ENCODE measurements at regions of chr22 and their contacts with region 1.

Region 1: DNA sequence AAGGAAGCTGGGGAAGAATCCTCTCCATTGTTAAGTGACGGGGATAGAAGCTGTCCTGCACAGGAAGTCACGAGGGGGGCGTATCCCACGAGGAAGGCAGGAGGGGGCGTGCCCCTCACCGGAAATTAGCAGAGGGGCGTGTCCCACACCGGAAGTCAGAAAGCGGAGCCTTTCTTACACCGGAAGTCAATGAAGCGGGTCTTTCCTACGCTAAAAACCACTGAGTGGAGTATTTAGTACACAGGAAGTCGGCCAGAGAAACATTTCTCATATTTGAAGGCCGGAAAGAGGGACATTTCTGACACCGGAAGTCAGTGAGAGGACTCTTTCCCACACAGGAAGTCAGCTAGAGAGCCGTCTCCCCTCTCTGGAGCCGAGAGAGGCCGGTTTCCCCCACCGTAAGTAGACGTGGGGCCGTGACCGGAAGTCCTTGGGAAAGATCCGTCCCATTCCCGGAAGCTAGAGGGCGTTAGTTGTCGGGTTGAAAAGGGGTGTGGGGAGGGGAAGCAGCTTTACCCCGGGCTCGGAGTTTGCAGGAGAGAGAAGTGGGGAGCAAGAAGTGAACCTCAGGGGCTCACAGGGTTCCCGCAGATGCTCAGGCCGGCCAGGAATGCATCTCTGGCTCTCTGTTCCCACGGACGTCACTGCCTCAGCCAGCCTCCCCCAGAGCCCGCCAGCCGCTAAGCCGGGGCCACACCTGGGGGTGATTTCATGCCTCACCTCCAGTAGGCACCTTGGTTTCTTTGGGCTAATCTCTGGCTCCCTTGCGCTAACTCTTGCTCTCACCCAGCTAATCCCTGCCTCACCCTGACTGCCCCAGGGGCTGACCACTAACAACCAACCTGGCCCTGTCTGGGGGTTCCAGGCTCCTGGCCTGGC is 15.4 kb downstream of the MIAT start:
- DNase-seq: peak; percentile 99
- H3K4me3 ChIP-seq: peak overlapping the region; percentile 82
- H3K27ac ChIP-seq: peak overlapping the region; percentile 97
- H3K4me1 ChIP-seq: peaks cover 71% of the 10 kb centered on the region
- CTCF ChIP-seq: peak; percentile 71

Region 2: GRCh38 chr22:26364066-26365015 is 308.5 kb before region 1 on chr22:
- CTCF ChIA-PET with region 1: no interaction called
- POLR2A ChIA-PET with region 1: interaction called, 3 read pairs
- intact Hi-C with region 1: loop called (anchors 10 kb)
- DNase-seq: peak; percentile 88
- H3K4me3 ChIP-seq: no peak overlapping the region
- H3K27ac ChIP-seq: no peak overlapping the region
- H3K4me1 ChIP-seq: no peaks in the 10 kb centered on the region
- CTCF ChIP-seq: peak; percentile 88

Region 3: DNA sequence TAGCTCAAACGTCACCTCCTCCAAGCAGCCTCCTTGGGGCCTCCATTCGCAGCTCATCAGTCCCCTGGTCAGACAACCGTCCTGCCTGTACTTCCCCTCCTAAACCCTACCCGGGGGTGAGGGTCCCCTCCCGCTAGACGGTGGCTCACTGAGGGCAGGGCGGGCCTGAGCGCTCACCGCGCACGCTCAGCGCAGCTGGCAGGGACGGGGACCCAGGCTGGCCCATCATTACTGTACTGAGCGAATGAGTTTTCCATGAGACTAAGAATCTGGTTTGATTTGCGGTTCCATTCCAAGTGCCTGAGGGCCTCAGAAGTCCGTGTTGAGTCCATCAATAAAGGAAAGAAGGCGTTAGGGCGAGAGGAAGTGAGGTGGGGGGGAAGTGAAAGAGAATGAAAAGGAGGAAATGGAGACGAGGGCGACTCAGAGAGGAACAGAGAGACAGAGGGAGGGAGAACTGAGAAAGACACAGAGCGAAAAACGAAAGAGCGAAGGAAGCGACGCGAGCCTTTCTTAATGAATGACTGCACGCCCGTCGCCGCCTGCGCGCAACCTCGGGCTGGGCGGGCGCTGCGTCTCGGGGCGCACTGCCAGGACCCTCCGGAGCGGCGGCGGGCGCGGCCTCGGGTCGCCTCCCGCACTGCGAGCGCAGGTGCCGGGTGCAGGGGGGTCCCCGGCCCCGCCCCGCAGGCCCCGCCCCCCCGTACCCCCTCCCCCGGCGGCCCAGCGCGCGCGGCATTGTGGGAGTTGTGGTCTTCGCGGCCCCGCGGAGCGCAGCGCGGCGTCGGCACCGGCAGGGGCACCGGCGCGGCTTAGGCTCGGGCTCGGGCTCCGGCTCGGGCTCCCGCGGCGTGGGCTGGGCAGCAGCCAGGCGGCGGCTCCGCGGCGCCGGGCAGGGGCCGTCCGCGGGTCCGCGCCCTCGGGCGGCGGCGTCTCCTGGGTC is 244.0 kb before region 1 on chr22 and contains the start of gene ASPHD2:
- CTCF ChIA-PET with region 1: no interaction called
- POLR2A ChIA-PET with region 1: interaction called, 3 read pairs
- intact Hi-C with region 1: loop called (anchors 2 kb)
- DNase-seq: peak; percentile 90
- H3K4me3 ChIP-seq: peak within 1 kb of the TSS; percentile 73
- H3K27ac ChIP-seq: peak within 1 kb of the TSS; percentile 91
- H3K4me1 ChIP-seq: peaks cover 42% of the 10 kb centered on the region
- CTCF ChIP-seq: no peak
- total RNA-seq, gene ASPHD2: 5.8 and 6.5 TPM in 2 replicates

Region 4: DNA sequence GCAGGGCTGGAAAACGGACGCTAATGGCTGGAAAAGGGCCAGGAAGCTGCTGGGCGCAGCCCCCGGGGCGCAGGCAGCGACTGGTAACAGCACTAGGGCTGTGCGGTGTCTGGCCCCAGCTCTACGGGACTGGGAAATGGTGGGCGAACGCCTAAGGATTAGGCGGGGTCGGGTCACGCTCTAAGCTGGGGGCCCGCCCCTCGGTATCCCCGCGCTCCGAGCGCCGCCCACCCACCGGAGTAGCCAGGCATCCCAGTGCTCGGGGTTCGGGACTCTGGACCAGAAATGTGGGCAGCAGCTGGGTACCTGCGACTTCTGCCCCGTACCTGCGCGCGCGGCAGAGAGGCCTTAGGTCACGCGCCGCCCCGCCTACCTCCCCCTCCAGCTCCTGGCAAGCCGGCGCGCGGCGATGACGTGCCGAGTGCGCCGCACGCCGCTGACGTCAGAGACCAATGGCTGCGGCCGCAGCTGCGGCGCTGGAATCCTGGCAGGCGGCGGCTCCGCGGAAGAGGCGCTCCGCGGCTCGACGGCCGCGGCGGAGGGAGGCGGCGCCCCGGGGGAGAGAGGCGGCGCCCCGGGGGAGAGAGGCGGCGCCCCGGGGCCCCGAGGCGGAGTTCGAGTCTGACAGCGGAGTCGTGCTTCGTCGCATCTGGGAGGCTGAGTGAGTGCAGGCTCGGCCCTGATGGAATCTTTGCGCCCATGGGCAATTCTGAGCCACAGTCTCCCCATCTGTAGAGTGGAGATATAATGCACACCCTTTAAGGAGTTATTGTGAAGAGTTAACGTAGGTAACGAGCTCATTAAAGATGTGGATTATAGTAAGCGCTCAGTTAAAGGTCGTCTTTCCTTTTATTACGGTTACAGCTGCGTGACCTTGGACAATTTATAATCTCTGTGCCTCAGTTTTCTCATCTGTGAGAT is 189.1 kb before region 1 on chr22 and contains the starts of genes HPS4 and SRRD:
- CTCF ChIA-PET with region 1: interaction called, 3 read pairs
- POLR2A ChIA-PET with region 1: interaction called, 21 read pairs
- intact Hi-C with region 1: loop called (anchors 2 kb)
- DNase-seq: peak; percentile 94
- H3K4me3 ChIP-seq: peak within 1 kb of the TSS; percentile 86
- H3K27ac ChIP-seq: peak within 1 kb of the TSS; percentile 95
- H3K4me1 ChIP-seq: peaks cover 69% of the 10 kb centered on the region
- CTCF ChIP-seq: no peak
- total RNA-seq, gene HPS4: 64.8 and 77.4 TPM in 2 replicates
- total RNA-seq, gene SRRD: 20.7 and 23.1 TPM in 2 replicates

Region 5: DNA sequence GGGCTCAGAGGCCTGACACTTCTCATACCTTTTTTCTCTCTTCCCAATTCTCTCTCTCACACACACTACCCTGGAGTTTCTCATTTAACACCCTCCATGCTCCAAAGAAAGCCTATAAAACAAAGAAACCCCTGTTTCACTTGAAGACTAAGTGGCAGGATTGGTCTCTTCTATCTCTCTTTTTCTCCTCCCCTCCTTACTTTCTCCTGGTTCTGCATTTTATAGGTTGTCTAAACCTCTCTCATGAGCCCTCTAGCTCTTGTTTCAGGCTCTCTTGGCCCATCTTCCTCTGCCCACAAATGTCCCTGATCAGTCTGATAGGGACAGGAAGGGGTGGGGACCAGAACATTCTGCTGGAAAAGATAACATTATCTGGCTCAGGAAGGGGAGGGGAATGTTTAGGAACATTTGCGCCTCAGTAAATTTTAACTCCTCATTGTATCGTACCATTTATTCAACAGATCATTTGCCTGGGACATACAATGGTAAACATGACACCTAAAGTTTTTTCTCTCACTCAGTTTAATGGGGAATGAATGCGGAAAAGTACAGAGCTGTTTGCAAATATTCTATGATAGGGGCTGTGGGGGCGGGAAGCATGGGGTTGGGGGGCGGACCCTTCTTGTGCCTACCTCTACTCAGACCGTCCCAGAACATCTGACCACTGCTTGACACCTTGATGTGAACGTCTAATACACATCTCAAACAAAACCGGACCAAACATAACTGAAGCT is 40.2 kb before region 1 on chr22:
- CTCF ChIA-PET with region 1: no interaction called
- POLR2A ChIA-PET with region 1: no interaction called
- intact Hi-C with region 1: no loop called
- DNase-seq: no peak
- H3K4me3 ChIP-seq: no peak overlapping the region
- H3K27ac ChIP-seq: no peak overlapping the region
- H3K4me1 ChIP-seq: no peaks in the 10 kb centered on the region
- CTCF ChIP-seq: no peak

Region 6: GRCh38 chr22:26660961-26661578 is 11.8 kb before region 1 on chr22:
- CTCF ChIA-PET with region 1: interaction called, 3 read pairs
- POLR2A ChIA-PET with region 1: interaction called, 61 read pairs
- intact Hi-C with region 1: no loop called
- DNase-seq: peak; percentile 51
- H3K4me3 ChIP-seq: peak overlapping the region; percentile 16
- H3K27ac ChIP-seq: peak overlapping the region; percentile 58
- H3K4me1 ChIP-seq: peaks cover 93% of the 10 kb centered on the region
- CTCF ChIP-seq: no peak; the same call in 1 of the 2 replicates

Region 7: DNA sequence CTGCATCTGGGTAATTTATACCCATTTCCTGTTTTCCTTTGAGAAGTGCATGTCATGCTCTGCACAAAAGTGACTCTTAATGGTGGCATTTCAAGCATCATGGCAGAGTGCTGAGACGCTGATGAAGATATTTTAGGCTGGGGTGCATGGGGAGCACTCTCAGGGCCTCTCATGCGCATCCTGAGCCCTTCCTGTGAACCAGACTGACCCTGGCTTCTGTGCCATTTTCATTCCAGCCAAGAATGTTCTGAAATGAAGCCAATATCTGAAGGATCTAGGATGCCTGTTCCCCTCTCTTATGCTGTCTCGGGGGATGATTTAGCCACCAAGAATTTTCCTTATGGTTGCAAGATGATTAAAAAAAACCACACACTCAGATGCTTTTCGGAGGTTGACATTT is 46.1 kb after region 1 on chr22:
- CTCF ChIA-PET with region 1: no interaction called
- POLR2A ChIA-PET with region 1: no interaction called
- intact Hi-C with region 1: no loop called
- DNase-seq: no peak
- H3K4me3 ChIP-seq: no peak overlapping the region
- H3K27ac ChIP-seq: no peak overlapping the region
- H3K4me1 ChIP-seq: no peaks in the 10 kb centered on the region
- CTCF ChIP-seq: no peak

Region 8: DNA sequence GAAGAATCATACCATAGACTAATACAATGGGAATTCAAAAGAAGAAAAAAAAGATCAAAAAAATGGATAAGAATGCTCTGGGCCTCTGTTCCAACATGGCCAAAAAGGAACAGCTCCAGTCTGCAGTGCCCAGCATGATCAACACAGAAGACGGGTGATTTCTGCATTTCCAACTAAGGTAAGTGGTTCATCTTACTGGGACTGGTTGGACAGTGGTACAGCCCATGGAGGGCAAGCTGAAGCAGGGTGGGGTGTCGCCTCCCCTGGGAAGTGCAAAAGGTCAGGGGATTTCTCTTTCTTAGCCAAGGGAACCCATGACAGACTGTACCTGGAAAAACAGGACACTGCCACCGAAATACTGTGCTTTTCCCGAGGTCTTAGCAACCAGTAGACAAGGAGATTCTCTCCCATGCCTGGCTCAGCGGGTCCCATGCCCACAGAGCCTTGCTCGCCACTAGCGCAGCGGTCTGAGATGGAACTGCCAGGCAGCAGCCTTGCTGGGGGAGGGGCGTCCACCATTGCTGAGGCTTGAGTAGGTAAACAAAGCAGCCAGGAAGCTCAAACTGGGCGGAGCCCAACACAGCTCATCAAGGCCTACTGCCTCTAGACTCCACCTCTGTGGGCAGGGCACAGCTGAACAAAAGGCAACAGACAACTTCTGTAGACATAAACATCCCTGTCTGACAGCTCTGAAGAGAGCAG is 700.3 kb after region 1 on chr22:
- CTCF ChIA-PET with region 1: no interaction called
- POLR2A ChIA-PET with region 1: no interaction called
- intact Hi-C with region 1: loop called (anchors 10 kb)
- DNase-seq: peak; percentile 80
- H3K4me3 ChIP-seq: peak overlapping the region; percentile 55
- H3K27ac ChIP-seq: peak overlapping the region; percentile 49
- H3K4me1 ChIP-seq: peaks cover 60% of the 10 kb centered on the region
- CTCF ChIP-seq: no peak

Region 9: DNA sequence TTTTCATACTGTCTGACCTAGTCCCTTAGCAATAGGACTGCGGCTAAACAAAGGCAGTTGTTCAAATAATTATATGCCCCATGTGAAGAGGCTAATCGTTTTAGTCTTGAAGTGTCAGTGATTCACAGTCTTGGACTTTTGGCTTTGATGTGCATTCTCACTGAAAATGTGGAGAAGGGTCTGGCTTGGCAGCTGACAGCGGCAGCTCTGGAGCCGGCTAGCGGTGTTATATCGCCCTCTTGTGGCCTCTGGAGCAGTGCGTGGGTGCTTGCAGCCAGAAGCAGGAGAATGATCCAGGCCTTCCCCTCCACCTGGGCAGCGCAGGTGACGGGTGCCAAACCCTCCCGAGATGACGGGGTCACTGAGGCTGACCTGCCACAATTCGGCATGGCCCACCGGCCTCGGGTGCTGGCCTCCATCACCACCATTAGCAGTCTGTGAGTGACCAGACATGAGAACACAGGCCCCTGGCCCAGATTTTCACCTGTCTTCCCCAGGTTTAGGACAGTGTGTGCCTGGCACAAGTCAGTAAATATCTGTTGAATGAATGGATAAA is 1336.5 kb after region 1 on chr22:
- CTCF ChIA-PET with region 1: no interaction called
- POLR2A ChIA-PET with region 1: no interaction called
- intact Hi-C with region 1: loop called (anchors 10 kb)
- DNase-seq: peak; percentile 79
- H3K4me3 ChIP-seq: no peak overlapping the region
- H3K27ac ChIP-seq: no peak overlapping the region
- H3K4me1 ChIP-seq: peaks cover 10% of the 10 kb centered on the region
- CTCF ChIP-seq: peak; percentile 99

Measured in OCI-LY7 (cell line).